GM12878 (cell line): ENCODE measurements at regions of chr9 and their contacts with region 1.

Region 1: GRCh38 chr9:96327694-96328352 is 25.8 kb upstream of the HSD17B3 start:
- DNase-seq: peak; percentile 8
- ATAC-seq: peak; percentile 85
- H3K4me3 ChIP-seq: no peak overlapping the region
- H3K27ac ChIP-seq: no peak overlapping the region
- H3K4me1 ChIP-seq: no peaks in the 10 kb centered on the region
- H3K27me3 ChIP-seq: no peaks in the 10 kb centered on the region
- CTCF ChIP-seq: peak; percentile 71 to 75 (median 75)
- EP300 ChIP-seq: no peak
- POLR2A ChIP-seq: no peak
- RAD21 ChIP-seq: peak; percentile 77

Region 2: DNA sequence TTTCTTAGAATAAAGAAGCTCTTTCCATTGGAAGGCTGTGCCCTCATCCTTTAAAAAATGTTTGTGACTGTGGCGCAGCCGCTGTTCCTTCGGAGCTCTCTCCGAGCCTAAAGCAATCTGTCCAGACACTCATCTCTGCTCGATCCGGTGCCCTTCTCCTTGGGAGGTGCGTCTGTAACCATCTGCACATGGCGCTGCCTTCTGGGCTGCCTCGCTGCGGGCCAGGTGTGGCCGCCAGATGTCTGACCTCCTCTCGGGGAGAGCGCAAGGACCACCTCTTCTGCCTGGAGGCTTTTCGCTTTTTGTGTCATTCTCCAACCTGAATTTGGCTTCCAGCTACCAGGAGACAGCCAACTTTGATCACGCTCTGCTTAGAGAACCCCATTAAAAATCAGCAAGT is 657.7 kb before region 1 on chr9:
- CTCF ChIA-PET with region 1: no interaction called
- POLR2A ChIA-PET with region 1: no interaction called
- RAD21 ChIA-PET with region 1: no interaction called
- SMC1A ChIA-PET with region 1: no interaction called
- in situ Hi-C with region 1: no loop called
- intact Hi-C with region 1: no loop called
- DNase-seq: no peak
- ATAC-seq: no peak
- H3K4me3 ChIP-seq: no peak overlapping the region
- H3K27ac ChIP-seq: no peak overlapping the region
- H3K4me1 ChIP-seq: no peaks in the 10 kb centered on the region
- H3K27me3 ChIP-seq: peaks cover 0 to 4% of the 10 kb centered on the region in 2 experiments; a peak in 2 of 4 replicates
- CTCF ChIP-seq: no peak
- EP300 ChIP-seq: no peak
- POLR2A ChIP-seq: no peak
- RAD21 ChIP-seq: no peak

Region 3: DNA sequence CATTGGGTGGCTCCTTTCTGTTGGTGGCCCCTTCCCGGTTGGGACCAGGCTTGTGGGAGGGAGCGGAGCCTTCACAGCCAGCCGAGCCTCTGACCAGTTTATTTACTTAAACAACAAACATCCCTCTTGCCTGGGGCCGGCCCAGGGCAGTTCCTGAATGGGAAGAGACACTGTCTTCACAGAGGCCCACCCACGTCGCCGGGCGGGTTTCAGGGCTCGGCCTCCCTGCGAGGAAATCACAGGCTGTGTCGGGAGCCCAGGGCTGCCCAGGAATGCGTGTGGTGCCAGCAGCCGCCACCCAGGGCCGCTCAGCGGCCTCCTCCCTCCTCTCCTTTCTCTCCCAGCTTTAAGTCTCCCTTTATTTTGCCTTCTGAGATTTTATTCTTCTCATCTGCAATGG is 158.3 kb before region 1 on chr9:
- CTCF ChIA-PET with region 1: no interaction called
- POLR2A ChIA-PET with region 1: no interaction called
- RAD21 ChIA-PET with region 1: no interaction called
- SMC1A ChIA-PET with region 1: no interaction called
- in situ Hi-C with region 1: no loop called
- intact Hi-C with region 1: no loop called
- DNase-seq: no peak
- ATAC-seq: no peak
- H3K4me3 ChIP-seq: no peak overlapping the region
- H3K27ac ChIP-seq: no peak overlapping the region
- H3K4me1 ChIP-seq: no peaks in the 10 kb centered on the region
- H3K27me3 ChIP-seq: peaks cover 0 to 4% of the 10 kb centered on the region in 2 experiments; a peak in 1 of 4 replicates
- CTCF ChIP-seq: no peak
- EP300 ChIP-seq: no peak
- POLR2A ChIP-seq: no peak
- RAD21 ChIP-seq: no peak

Region 4: GRCh38 chr9:96299823-96300222 is 28.0 kb before region 1 on chr9:
- CTCF ChIA-PET with region 1: no interaction called
- POLR2A ChIA-PET with region 1: no interaction called
- RAD21 ChIA-PET with region 1: no interaction called
- SMC1A ChIA-PET with region 1: no interaction called
- in situ Hi-C with region 1: no loop called
- intact Hi-C with region 1: no loop called
- DNase-seq: no peak
- ATAC-seq: no peak
- H3K4me3 ChIP-seq: no peak overlapping the region
- H3K27ac ChIP-seq: no peak overlapping the region
- H3K4me1 ChIP-seq: no peaks in the 10 kb centered on the region
- H3K27me3 ChIP-seq: no peaks in the 10 kb centered on the region; a peak in 1 of 4 replicates
- CTCF ChIP-seq: no peak
- EP300 ChIP-seq: no peak
- POLR2A ChIP-seq: no peak
- RAD21 ChIP-seq: no peak

Region 5: GRCh38 chr9:96317335-96317980 is 10.4 kb before region 1 on chr9:
- CTCF ChIA-PET with region 1: interaction called, 38 read pairs
- POLR2A ChIA-PET with region 1: no interaction called
- RAD21 ChIA-PET with region 1: interaction called, 3 read pairs
- SMC1A ChIA-PET with region 1: interaction called, 8 read pairs
- in situ Hi-C with region 1: no loop called
- intact Hi-C with region 1: no loop called
- DNase-seq: no peak
- ATAC-seq: peak; percentile 76
- H3K4me3 ChIP-seq: no peak overlapping the region
- H3K27ac ChIP-seq: no peak overlapping the region
- H3K4me1 ChIP-seq: no peaks in the 10 kb centered on the region
- H3K27me3 ChIP-seq: no peaks in the 10 kb centered on the region
- CTCF ChIP-seq: peak; percentile 86 to 87 (median 87)
- EP300 ChIP-seq: no peak
- POLR2A ChIP-seq: no peak
- RAD21 ChIP-seq: peak; percentile 89

Region 6: DNA sequence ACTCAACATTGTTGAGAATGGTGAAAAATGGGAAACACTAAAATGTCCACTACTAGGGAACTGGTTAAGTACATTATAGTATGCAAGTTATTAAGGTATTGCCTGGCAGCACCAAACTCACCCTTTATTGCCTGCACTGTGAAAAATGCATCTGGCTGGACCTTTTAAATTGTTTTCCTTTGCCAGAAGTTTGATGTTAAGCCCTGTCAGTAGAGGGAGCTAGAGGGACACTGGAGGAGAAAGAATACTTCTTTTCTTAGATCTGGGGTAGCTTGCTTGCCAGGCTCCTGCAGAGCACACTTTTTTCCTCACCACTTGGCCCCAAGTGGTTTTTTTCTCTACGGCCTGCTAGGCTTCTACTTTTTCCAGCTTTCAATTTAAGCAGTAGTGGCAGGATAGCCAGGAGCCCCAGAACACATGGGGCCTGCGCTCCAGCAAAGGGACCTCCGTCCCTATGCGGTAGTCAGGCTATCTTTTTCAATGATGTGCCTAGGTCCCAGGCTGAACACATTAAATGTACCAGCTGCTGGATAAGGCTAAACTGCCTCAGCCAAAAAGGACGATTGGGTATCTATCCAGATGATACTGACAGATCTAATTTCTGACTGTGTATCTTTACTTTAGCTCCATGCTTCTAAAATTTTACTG is 114.1 kb after region 1 on chr9:
- CTCF ChIA-PET with region 1: interaction called, 19 read pairs
- POLR2A ChIA-PET with region 1: no interaction called
- RAD21 ChIA-PET with region 1: interaction called, 7 read pairs
- SMC1A ChIA-PET with region 1: interaction called, 12 read pairs
- in situ Hi-C with region 1: no loop called
- intact Hi-C with region 1: loop called (anchors 5 kb)
- DNase-seq: no peak
- ATAC-seq: peak; percentile 85
- H3K4me3 ChIP-seq: no peak overlapping the region
- H3K27ac ChIP-seq: no peak overlapping the region
- H3K4me1 ChIP-seq: no peaks in the 10 kb centered on the region
- H3K27me3 ChIP-seq: no peaks in the 10 kb centered on the region
- CTCF ChIP-seq: peak; percentile 68 to 72 (median 71)
- EP300 ChIP-seq: no peak
- POLR2A ChIP-seq: no peak
- RAD21 ChIP-seq: peak; percentile 84

Region 7: GRCh38 chr9:96667361-96667728 is 339.5 kb after region 1 on chr9:
- CTCF ChIA-PET with region 1: interaction called, 56 read pairs
- POLR2A ChIA-PET with region 1: no interaction called
- RAD21 ChIA-PET with region 1: interaction called, 36 read pairs
- SMC1A ChIA-PET with region 1: interaction called, 30 read pairs
- in situ Hi-C with region 1: no loop called
- intact Hi-C with region 1: loop called (anchors 1 kb)
- DNase-seq: no peak
- ATAC-seq: no peak; the same call in 2 of the 3 replicates
- H3K4me3 ChIP-seq: no peak overlapping the region
- H3K27ac ChIP-seq: no peak overlapping the region
- H3K4me1 ChIP-seq: no peaks in the 10 kb centered on the region
- H3K27me3 ChIP-seq: no peaks in the 10 kb centered on the region
- CTCF ChIP-seq: no peak
- EP300 ChIP-seq: no peak
- POLR2A ChIP-seq: no peak
- RAD21 ChIP-seq: no peak